Activated T-helper 1 cell treated with anti-CD3 and anti-CD28 coated beads, Interleukin-12 subunit alpha, Interleukin-12 subunit beta, Interleukin-2, Interleukin-4 antibody, amounts not matched to agents 30 ng/mL and 10 ng/mL and 1 ng/mL, durations not matched to agents 14 hours and 24 hours and 36 hours (primary cell): ENCODE measurements at regions of chr10 and their contacts with region 1.

Region 1: GRCh38 chr10:62224606-62225005 is 44.0 kb downstream of the RTKN2 start:
- DNase-seq: no peak
- H3K4me3 Mint-ChIP-seq: no peak overlapping the region
- H3K27ac Mint-ChIP-seq: no peak overlapping the region
- H3K4me1 Mint-ChIP-seq: peaks cover 5% of the 10 kb centered on the region
- H3K27me3 Mint-ChIP-seq: no peaks in the 10 kb centered on the region

Region 2: GRCh38 chr10:62199584-62199983 is 25.0 kb before region 1 on chr10:
- intact Hi-C with region 1: loop called (anchors 2 kb)
- DNase-seq: no peak
- H3K4me3 Mint-ChIP-seq: no peak overlapping the region
- H3K27ac Mint-ChIP-seq: peak overlapping the region; percentile 32
- H3K4me1 Mint-ChIP-seq: peaks cover 39% of the 10 kb centered on the region
- H3K27me3 Mint-ChIP-seq: no peaks in the 10 kb centered on the region